ENCODE measurements at regions of chr1 and their contacts with region 1.

Region 1: DNA sequence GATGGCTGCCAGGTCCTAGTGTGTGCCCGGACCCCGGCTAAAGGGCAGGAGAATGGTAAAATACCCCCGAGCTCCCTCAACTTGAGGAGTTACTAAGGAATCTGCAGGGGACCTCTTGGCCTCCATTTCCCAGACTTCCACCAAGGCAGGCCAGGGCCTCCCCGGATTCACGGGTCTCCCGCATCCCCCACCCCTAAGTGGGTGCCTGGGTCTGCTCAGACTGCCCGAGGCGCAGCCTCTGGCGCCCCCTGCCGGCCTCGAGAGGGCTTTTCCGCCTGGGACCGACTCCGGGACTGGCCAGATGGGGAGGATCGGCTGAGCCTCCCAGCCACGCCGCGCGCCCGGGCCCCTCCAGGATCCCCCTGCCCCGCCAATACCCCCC is 1.7 kb downstream of the PLEKHG5 start:
- DNase-seq: peak; percentile 88
- ATAC-seq: peak; percentile 71
- H3K4me3 Mint-ChIP-seq: peak overlapping the region; percentile 74
- H3K27ac Mint-ChIP-seq: peak overlapping the region; percentile 63
- H3K4me1 Mint-ChIP-seq: peaks cover 18% of the 10 kb centered on the region
- H3K27me3 Mint-ChIP-seq: peaks cover 9% of the 10 kb centered on the region

Region 2: DNA sequence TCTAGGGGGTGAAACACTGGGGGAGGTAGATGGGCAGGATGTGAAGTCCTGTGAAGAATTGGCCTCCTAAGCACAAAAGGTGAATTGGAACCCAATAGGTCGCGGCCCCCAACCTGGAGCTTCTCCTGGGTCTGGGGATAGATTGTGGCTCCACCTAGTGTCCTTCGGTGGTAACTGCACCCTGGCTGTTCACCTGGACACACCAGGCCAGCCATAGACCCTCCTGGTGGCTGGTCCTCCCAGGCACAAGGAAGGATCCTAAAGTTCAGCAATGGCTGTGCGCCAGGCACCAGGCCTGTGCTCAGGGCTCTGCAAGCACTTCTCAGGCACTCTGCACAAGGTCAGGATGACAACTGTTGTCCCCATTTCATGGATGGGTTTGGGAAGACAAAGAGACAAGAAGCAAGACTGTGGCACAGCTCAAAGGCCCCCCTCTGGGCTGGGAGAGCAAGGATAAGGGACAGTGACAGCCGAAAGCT is 51.7 kb before region 1 on chr1:
- CTCF ChIA-PET with region 1: interaction called, 10 read pairs
- POLR2A ChIA-PET with region 1: no interaction called
- intact Hi-C with region 1: loop called in 1 of 2 experiments (anchors 5 kb)
- DNase-seq: peak; percentile 85
- ATAC-seq: peak; percentile 72
- H3K4me3 Mint-ChIP-seq: no peak overlapping the region
- H3K27ac Mint-ChIP-seq: no peak overlapping the region
- H3K4me1 Mint-ChIP-seq: peaks cover 2% of the 10 kb centered on the region
- H3K27me3 Mint-ChIP-seq: peaks cover 16% of the 10 kb centered on the region

Region 3: DNA sequence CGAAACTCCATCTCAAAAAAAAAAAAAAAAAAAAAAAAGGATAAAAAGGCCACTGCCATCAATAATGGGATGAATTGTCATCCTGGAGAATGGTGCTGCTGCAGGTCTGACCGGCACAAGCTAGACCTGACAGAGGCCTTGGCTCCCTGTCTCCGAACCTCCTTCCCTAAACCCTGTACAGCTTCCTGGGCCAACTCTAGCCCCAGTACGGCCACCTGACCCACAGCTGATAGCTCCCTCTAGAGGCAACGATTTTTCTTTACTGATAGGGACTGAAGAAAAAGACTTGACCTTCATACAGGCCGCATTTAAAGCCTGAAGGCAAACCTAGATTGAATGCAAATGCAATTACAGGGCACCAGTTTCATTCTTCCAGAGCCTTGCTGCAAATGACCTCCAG is 33.8 kb after region 1 on chr1:
- CTCF ChIA-PET with region 1: interaction called, 3 read pairs
- POLR2A ChIA-PET with region 1: no interaction called
- intact Hi-C with region 1: loop called in 1 of 2 experiments (anchors 2 kb)
- DNase-seq: no peak
- ATAC-seq: no peak
- H3K4me3 Mint-ChIP-seq: no peak overlapping the region
- H3K27ac Mint-ChIP-seq: no peak overlapping the region
- H3K4me1 Mint-ChIP-seq: no peaks in the 10 kb centered on the region
- H3K27me3 Mint-ChIP-seq: no peaks in the 10 kb centered on the region

Region 4: GRCh38 chr1:6646499-6647148 is 156.8 kb after region 1 on chr1:
- CTCF ChIA-PET with region 1: interaction called, 7 read pairs
- POLR2A ChIA-PET with region 1: no interaction called
- intact Hi-C with region 1: loop called (anchors 1 kb)
- DNase-seq: peak; percentile 41
- ATAC-seq: peak; percentile 51
- H3K4me3 Mint-ChIP-seq: no peak overlapping the region
- H3K27ac Mint-ChIP-seq: no peak overlapping the region
- H3K4me1 Mint-ChIP-seq: no peaks in the 10 kb centered on the region
- H3K27me3 Mint-ChIP-seq: no peaks in the 10 kb centered on the region